BJ (cell line): ENCODE measurements at regions of chr3 and their contacts with region 1.

Region 1: GRCh38 chr3:136207489-136208115 is 11.5 kb upstream of the MSL2 start:
- DNase-seq: no peak
- H3K4me3 ChIP-seq: no peak overlapping the region
- H3K27me3 ChIP-seq: no peaks in the 10 kb centered on the region
- CTCF ChIP-seq: no peak

Region 2: DNA sequence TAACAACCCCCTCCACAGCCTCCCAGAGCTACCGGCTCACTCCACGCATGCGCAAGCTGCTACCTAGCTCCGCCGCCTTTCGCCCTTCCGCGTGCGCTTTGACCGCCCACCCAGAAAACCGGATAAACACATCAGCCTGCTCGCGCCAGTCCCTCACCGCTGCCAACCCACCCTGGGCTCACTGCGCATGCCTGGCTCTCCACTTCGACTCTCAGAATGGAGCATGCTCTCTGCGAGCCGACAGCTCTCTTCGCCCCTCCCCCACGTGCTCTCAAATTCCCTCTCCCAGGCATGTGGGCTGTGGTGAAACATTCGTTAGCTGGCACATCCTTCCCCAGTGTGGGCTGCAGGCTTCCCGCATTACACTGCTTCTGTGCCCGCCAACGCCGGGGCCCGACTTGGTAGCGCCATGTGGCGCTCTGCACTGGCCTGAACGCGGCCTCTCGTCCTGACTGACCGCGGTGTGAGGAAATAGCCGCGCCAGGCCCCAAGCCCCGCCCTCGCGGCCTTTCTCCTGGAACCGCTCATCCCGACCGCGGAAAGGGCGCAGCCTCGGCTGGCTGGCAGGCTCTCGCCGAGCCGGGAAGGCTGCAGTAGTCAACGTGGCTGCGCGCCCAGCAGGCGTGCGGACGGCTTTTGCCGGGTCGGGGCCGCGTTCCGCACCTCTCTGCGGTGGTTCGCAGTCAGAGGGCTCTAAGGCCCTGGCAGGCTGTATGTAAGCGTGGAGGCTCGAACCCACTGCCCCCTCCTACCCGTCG is 11.0 kb before region 1 on chr3:
- CTCF ChIA-PET with region 1: no interaction called
- POLR2A ChIA-PET with region 1: interaction called, 22 read pairs
- DNase-seq: peak; percentile 99
- H3K4me3 ChIP-seq: peak overlapping the region; percentile 84
- H3K27me3 ChIP-seq: no peaks in the 10 kb centered on the region
- CTCF ChIP-seq: no peak

Region 3: DNA sequence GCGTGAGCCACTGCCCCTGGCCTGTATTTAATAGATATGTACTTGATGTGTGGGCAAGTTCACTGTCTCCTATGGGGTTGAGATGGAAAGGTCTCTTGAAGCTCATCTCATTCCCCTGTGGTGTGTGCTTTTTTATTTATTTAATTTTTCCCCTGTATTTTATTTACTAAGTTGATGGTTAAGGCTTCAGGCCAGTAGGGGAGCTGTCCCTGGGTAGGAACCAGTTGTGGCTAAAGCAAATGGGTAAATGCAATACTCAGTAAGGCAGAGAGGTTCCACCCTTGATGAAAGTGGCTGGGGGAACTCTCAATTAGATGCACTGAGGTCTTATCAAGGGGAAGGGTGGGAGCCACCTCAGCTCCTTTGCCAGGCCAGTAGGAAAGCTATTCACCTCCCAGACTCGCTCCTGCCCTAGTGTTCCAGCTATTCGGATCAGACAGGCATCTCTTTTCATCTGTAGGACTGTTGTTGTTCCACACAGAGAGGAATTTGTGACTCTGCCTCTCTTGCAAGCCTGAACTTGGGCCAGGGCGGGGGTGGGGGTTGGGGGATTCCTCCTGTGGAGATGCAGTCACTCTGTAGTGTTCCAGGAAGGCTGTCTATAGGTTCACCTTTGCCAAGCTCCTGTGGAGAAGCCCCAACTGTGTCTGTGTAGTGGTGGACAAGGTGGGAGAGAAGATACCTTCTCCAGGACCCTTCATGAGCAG is 68.6 kb after region 1 on chr3:
- CTCF ChIA-PET with region 1: no interaction called
- POLR2A ChIA-PET with region 1: no interaction called
- DNase-seq: no peak
- H3K4me3 ChIP-seq: no peak overlapping the region
- H3K27me3 ChIP-seq: no peaks in the 10 kb centered on the region
- CTCF ChIP-seq: peak; percentile 16; the same call in 1 of the 2 replicates